Gastrocnemius medialis (tissue), 4 donors: ENCODE measurements at regions of chr2 and their contacts with region 1.

Region 1: DNA sequence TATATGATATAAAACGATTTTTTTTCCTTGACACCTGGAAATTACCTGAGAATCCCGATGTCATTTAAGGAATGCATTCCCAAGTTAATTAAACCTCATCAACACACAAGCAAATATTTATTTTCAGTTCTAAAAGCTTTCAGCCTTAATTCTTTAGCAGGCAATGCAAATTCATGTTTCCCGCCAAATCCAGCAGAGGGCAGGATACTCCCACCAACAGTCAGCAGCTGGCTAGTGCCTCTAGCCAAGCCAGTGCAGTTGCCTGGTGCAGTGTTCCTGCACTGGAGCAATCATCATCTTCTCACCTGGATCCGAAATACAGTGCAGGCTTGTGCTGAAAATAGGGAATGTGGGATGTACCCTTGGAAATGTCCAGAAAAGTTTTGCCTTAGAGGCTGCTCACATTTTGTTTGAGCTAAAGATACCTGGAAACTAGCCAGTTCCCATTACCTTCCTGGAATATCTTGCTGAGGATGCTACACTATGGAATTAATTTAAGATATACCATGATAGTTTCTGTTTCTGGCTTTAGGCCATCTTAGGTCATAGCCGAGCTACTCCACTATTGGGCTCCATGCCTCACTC is 48.4 kb upstream of the CYTIP start:
- DNase-seq: peak; percentile 10 to 28
- ATAC-seq: peak in 1 of 2 donors; percentile 56
- H3K4me3 ChIP-seq: no peak overlapping the region
- H3K27ac ChIP-seq: no peak overlapping the region
- H3K4me1 ChIP-seq: no peaks in the 10 kb centered on the region
- H3K27me3 ChIP-seq: no peaks in the 10 kb centered on the region
- CTCF ChIP-seq: peak in 4 of 5 experiments; percentile 32 to 65 (median 58)
- POLR2A ChIP-seq: no peak

Region 2: DNA sequence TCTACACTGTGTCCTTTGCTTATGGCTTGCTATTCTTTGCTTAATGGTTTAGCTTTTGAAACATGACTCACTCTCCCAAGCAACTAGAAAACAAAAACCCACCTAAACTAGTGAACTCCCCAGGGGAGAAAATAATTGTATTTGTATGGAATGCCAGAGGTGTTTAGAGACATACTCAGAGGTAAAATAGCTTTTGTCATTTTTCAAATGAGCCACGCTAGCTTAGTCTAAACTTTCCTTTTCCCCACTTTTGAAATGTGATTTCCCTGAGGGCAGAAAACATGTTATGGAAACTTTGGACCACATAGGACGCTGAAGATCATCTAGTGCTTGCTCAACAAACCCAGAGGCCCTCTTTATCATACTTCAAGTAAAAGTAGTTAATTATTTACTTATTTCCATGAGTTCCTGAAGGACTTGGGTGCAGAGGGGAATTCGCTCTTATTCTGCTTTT is 31.9 kb before region 1 on chr2:
- in situ Hi-C with region 1: no loop called
- intact Hi-C with region 1: no loop called
- DNase-seq: no peak
- ATAC-seq: no peak
- H3K4me3 ChIP-seq: no peak overlapping the region
- H3K27ac ChIP-seq: no peak overlapping the region
- H3K4me1 ChIP-seq: no peaks in the 10 kb centered on the region
- H3K27me3 ChIP-seq: no peaks in the 10 kb centered on the region
- CTCF ChIP-seq: no peak
- POLR2A ChIP-seq: no peak

Region 3: GRCh38 chr2:157751462-157752058 is 259.3 kb after region 1 on chr2:
- in situ Hi-C with region 1: loop called in 1 of 4 experiments (anchors 25 kb)
- intact Hi-C with region 1: loop called (anchors 10 kb)
- DNase-seq: peak in 1 of 2 donors; percentile 39
- ATAC-seq: peak in 1 of 2 donors; percentile 61
- H3K4me3 ChIP-seq: peak overlapping the region in 1 of 4 donors; percentile 14
- H3K27ac ChIP-seq: peak overlapping the region; percentile 38 to 66 (median 54)
- H3K4me1 ChIP-seq: peaks cover 26 to 35% of the 10 kb centered on the region in 2 donors
- H3K27me3 ChIP-seq: no peaks in the 10 kb centered on the region
- CTCF ChIP-seq: no peak
- POLR2A ChIP-seq: no peak